ENCODE measurements at regions of chr13 and their contacts with region 1.

Region 1: DNA sequence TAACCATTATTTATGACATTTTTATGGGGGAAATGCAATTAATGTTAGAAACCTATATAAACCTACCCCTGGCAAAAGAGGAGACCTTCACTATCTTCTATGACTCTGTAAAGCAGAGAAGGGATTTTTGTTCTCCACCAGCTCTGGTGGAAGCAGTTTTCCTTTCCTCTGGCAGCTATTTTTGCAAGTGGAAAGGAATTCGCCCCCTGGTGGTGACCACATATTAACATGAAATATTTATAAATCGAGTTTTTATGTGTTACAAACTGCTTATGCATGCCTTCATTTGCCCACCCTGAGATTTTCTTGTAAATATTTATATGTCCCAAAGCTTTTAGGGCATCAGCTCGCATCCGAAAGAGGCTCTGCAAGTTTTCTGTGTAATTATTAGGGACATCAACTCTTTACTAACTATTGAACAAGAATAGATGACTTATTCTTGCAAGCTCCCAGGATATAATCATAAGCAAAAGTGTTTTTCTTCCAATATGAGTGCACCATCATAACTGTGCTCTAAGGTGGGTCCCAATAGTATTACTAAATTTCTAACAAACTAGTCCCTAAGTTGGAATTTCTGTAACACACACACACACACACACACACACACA is 62.4 kb downstream of the SERTM1 start:
- DNase-seq: no peak
- ATAC-seq: no peak
- H3K4me3 ChIP-seq: no peak overlapping the region
- H3K27ac ChIP-seq: no peak overlapping the region
- H3K4me1 ChIP-seq: no peaks in the 10 kb centered on the region
- H3K27me3 ChIP-seq: no peaks in the 10 kb centered on the region
- CTCF ChIP-seq: peak; percentile 36 to 63 (median 54)
- POLR2A ChIP-seq: no peak

Region 2: GRCh38 chr13:35978603-35979316 is 757.5 kb before region 1 on chr13:
- in situ Hi-C with region 1: loop called in 2 of 4 experiments (anchors 25 kb)
- intact Hi-C with region 1: no loop called
- DNase-seq: no peak
- ATAC-seq: peak; percentile 56 to 65
- H3K4me3 ChIP-seq: no peak overlapping the region
- H3K27ac ChIP-seq: peak overlapping the region; percentile 25 to 72 (median 60)
- H3K4me1 ChIP-seq: no peaks in the 10 kb centered on the region
- H3K27me3 ChIP-seq: no peaks in the 10 kb centered on the region
- CTCF ChIP-seq: peak; percentile 75 to 85 (median 78)
- POLR2A ChIP-seq: no peak

Region 3: GRCh38 chr13:36282818-36283445 is 453.3 kb before region 1 on chr13:
- in situ Hi-C with region 1: loop called in 2 of 4 experiments (anchors 10 to 25 kb)
- intact Hi-C with region 1: loop called (anchors 2 kb)
- DNase-seq: no peak
- ATAC-seq: no peak
- H3K4me3 ChIP-seq: no peak overlapping the region
- H3K27ac ChIP-seq: no peak overlapping the region
- H3K4me1 ChIP-seq: no peaks in the 10 kb centered on the region
- H3K27me3 ChIP-seq: no peaks in the 10 kb centered on the region
- CTCF ChIP-seq: peak; percentile 36 to 79 (median 74)
- POLR2A ChIP-seq: no peak

Region 4: GRCh38 chr13:36297366-36298338 is 438.6 kb before region 1 on chr13 and contains the start of gene CCDC169:
- in situ Hi-C with region 1: loop called in 1 of 4 experiments (anchors 25 kb)
- intact Hi-C with region 1: no loop called
- DNase-seq: peak; percentile 40 to 64
- ATAC-seq: peak; percentile 72 to 84
- H3K4me3 ChIP-seq: peak within 1 kb of the TSS; percentile 72 to 87 (median 78)
- H3K27ac ChIP-seq: peak within 1 kb of the TSS; percentile 60 to 72 (median 68)
- H3K4me1 ChIP-seq: peaks cover 13 to 15% of the 10 kb centered on the region in 2 donors
- H3K27me3 ChIP-seq: no peaks in the 10 kb centered on the region
- CTCF ChIP-seq: no peak
- POLR2A ChIP-seq: peak; percentile 20 to 23
- total RNA-seq, gene CCDC169: 0.10 to 1.7 TPM in 2 of 4 donors, not detected in the others

Region 5: GRCh38 chr13:36420437-36420891 is 315.8 kb before region 1 on chr13:
- in situ Hi-C with region 1: loop called in 1 of 4 experiments (anchors 25 kb)
- intact Hi-C with region 1: no loop called
- DNase-seq: peak in 1 of 2 donors; percentile 27
- ATAC-seq: peak in 1 of 2 donors; percentile 30
- H3K4me3 ChIP-seq: no peak overlapping the region
- H3K27ac ChIP-seq: no peak overlapping the region
- H3K4me1 ChIP-seq: no peaks in the 10 kb centered on the region
- H3K27me3 ChIP-seq: peaks cover 0 to 3% (median 0%) of the 10 kb centered on the region in 3 donors
- CTCF ChIP-seq: peak in 4 of 5 experiments; percentile 44 to 78 (median 66)
- POLR2A ChIP-seq: no peak

Region 6: GRCh38 chr13:36520111-36520510 is 216.1 kb before region 1 on chr13:
- in situ Hi-C with region 1: no loop called
- intact Hi-C with region 1: no loop called
- DNase-seq: no peak
- ATAC-seq: no peak
- H3K4me3 ChIP-seq: no peak overlapping the region
- H3K27ac ChIP-seq: no peak overlapping the region
- H3K4me1 ChIP-seq: no peaks in the 10 kb centered on the region
- H3K27me3 ChIP-seq: no peaks in the 10 kb centered on the region
- CTCF ChIP-seq: no peak
- POLR2A ChIP-seq: no peak

Region 7: GRCh38 chr13:36795463-36795862 is 59.2 kb after region 1 on chr13:
- in situ Hi-C with region 1: no loop called
- intact Hi-C with region 1: no loop called
- DNase-seq: no peak
- ATAC-seq: no peak
- H3K4me3 ChIP-seq: no peak overlapping the region
- H3K27ac ChIP-seq: no peak overlapping the region
- H3K4me1 ChIP-seq: no peaks in the 10 kb centered on the region
- H3K27me3 ChIP-seq: no peaks in the 10 kb centered on the region
- CTCF ChIP-seq: no peak
- POLR2A ChIP-seq: no peak

Region 8: GRCh38 chr13:36818804-36819738 is 82.8 kb after region 1 on chr13 and contains the start of gene RFXAP:
- in situ Hi-C with region 1: no loop called
- intact Hi-C with region 1: no loop called
- DNase-seq: peak; percentile 76 to 85
- ATAC-seq: peak; percentile 94 to 95
- H3K4me3 ChIP-seq: peak within 1 kb of the TSS; percentile 82 to 92 (median 84)
- H3K27ac ChIP-seq: peak within 1 kb of the TSS; percentile 78 to 84 (median 82)
- H3K4me1 ChIP-seq: peaks cover 10 to 16% of the 10 kb centered on the region in 2 donors
- H3K27me3 ChIP-seq: no peaks in the 10 kb centered on the region
- CTCF ChIP-seq: peak in 2 of 5 experiments; percentile 15 to 30
- POLR2A ChIP-seq: peak; percentile 50 to 52
- total RNA-seq, gene RFXAP: 0.71 to 3.0 (median 2.2) TPM

Measured in gastrocnemius medialis (tissue), 4 donors.